ENCODE measurements at regions of chr2 and their contacts with region 1.

Region 1: GRCh38 chr2:64698668-64699444 is 45.1 kb upstream of the SERTAD2 start:
- DNase-seq: no peak
- ATAC-seq: peak; percentile 89
- H3K4me3 Mint-ChIP-seq: no peak overlapping the region
- H3K27ac Mint-ChIP-seq: peak overlapping the region; percentile 70
- H3K4me1 Mint-ChIP-seq: peaks cover 54% of the 10 kb centered on the region
- H3K27me3 Mint-ChIP-seq: no peaks in the 10 kb centered on the region

Region 2: GRCh38 chr2:63977904-63978303 is 721.0 kb before region 1 on chr2:
- CTCF ChIA-PET with region 1: no interaction called
- POLR2A ChIA-PET with region 1: no interaction called
- intact Hi-C with region 1: no loop called
- DNase-seq: peak; percentile 51
- ATAC-seq: peak; percentile 91
- H3K4me3 Mint-ChIP-seq: no peak overlapping the region
- H3K27ac Mint-ChIP-seq: peak overlapping the region; percentile 63
- H3K4me1 Mint-ChIP-seq: peaks cover 29% of the 10 kb centered on the region
- H3K27me3 Mint-ChIP-seq: no peaks in the 10 kb centered on the region

Region 3: DNA sequence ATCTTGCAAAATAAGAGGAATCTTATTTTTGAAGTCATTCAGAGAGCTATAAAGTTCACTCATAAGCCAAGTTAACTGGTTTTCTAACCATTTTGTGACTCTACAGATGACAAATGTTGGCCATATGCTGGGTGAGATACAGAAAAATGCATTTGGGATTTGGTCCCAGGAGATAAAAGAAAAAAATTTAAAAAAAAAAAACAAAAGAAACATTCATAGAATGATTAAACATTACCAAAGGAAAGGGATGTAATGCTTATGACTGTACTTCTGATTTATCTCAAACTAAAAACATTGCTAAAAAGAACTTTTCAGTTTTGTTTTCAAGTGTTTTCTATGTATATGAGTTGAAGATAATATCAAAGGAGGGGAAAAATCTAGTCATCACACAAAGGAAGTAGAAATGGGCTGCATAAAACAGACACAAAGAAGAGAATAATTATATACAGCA is 597.7 kb before region 1 on chr2:
- CTCF ChIA-PET with region 1: no interaction called
- POLR2A ChIA-PET with region 1: no interaction called
- intact Hi-C with region 1: loop called in 1 of 2 experiments (anchors 5 kb)
- DNase-seq: no peak
- ATAC-seq: peak; percentile 86
- H3K4me3 Mint-ChIP-seq: peak overlapping the region; percentile 3
- H3K27ac Mint-ChIP-seq: peak overlapping the region; percentile 51
- H3K4me1 Mint-ChIP-seq: peaks cover 54% of the 10 kb centered on the region
- H3K27me3 Mint-ChIP-seq: no peaks in the 10 kb centered on the region

Region 4: DNA sequence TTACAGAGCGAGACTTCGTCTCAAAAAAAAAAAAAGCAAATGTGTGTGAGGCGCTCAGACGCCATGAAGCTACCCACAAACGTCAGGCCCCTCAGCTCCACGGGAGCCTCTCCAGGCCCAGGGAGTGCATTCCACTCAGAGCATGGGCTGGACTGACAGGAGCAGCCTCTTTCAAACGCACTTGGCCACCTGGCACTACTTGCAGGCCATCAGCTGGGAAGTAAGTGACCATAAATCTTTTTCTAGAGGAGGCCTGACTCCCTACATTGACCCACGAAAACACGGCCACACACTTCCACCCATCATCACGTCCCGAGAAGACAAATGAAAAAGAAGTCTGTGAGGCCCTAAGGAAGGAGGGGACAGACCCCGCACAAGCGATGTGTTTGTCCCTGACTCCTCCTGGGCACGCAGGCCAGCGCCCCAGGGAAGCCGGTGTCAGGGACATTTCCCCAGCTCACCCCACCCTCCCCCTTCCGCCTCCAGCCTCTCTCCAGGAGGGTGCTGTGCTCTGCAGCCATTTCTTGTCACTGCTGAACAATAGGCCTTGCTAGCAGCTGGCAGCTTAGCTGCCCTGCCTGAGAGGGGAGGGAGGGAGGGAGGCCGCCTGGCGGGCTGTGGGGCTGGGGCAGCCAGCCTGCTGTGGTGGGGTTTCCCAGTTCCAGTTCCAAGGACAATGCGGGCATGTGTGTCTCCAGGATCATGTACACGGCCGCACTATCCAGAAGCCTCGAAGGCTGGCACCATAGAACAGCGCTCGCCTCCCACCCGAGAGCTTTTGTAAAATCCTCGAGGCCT is 71.7 kb before region 1 on chr2:
- CTCF ChIA-PET with region 1: no interaction called
- POLR2A ChIA-PET with region 1: no interaction called
- intact Hi-C with region 1: no loop called
- DNase-seq: no peak
- ATAC-seq: no peak
- H3K4me3 Mint-ChIP-seq: no peak overlapping the region
- H3K27ac Mint-ChIP-seq: no peak overlapping the region
- H3K4me1 Mint-ChIP-seq: no peaks in the 10 kb centered on the region
- H3K27me3 Mint-ChIP-seq: no peaks in the 10 kb centered on the region

Region 5: GRCh38 chr2:64675860-64676259 is 23.0 kb before region 1 on chr2:
- CTCF ChIA-PET with region 1: interaction called, 8 read pairs
- POLR2A ChIA-PET with region 1: interaction called, 3 read pairs
- intact Hi-C with region 1: loop called (anchors 1 kb)
- DNase-seq: peak; percentile 90
- ATAC-seq: peak; percentile 100
- H3K4me3 Mint-ChIP-seq: no peak overlapping the region
- H3K27ac Mint-ChIP-seq: peak overlapping the region; percentile 62
- H3K4me1 Mint-ChIP-seq: peaks cover 44% of the 10 kb centered on the region
- H3K27me3 Mint-ChIP-seq: no peaks in the 10 kb centered on the region

Region 6: GRCh38 chr2:64730551-64731262 is 31.9 kb after region 1 on chr2:
- CTCF ChIA-PET with region 1: interaction called, 6 read pairs
- POLR2A ChIA-PET with region 1: interaction called, 3 read pairs
- intact Hi-C with region 1: loop called (anchors 1 to 2 kb)
- DNase-seq: peak; percentile 54
- ATAC-seq: peak; percentile 68
- H3K4me3 Mint-ChIP-seq: peak overlapping the region; percentile 74
- H3K27ac Mint-ChIP-seq: peak overlapping the region; percentile 96
- H3K4me1 Mint-ChIP-seq: peaks cover 61% of the 10 kb centered on the region
- H3K27me3 Mint-ChIP-seq: no peaks in the 10 kb centered on the region

Region 7: GRCh38 chr2:64854773-64855237 is 155.9 kb after region 1 on chr2:
- CTCF ChIA-PET with region 1: no interaction called
- POLR2A ChIA-PET with region 1: no interaction called
- intact Hi-C with region 1: no loop called
- DNase-seq: no peak
- ATAC-seq: peak; percentile 66
- H3K4me3 Mint-ChIP-seq: no peak overlapping the region
- H3K27ac Mint-ChIP-seq: no peak overlapping the region
- H3K4me1 Mint-ChIP-seq: peaks cover 4% of the 10 kb centered on the region
- H3K27me3 Mint-ChIP-seq: peaks cover 10% of the 10 kb centered on the region

Measured in activated CD4-positive, alpha-beta T cell treated with anti-CD3 and anti-CD28 coated beads for 36 hours (primary cell).